HAP-1 (cell line): ENCODE measurements at regions of chr10 and their contacts with region 1.

Region 1: DNA sequence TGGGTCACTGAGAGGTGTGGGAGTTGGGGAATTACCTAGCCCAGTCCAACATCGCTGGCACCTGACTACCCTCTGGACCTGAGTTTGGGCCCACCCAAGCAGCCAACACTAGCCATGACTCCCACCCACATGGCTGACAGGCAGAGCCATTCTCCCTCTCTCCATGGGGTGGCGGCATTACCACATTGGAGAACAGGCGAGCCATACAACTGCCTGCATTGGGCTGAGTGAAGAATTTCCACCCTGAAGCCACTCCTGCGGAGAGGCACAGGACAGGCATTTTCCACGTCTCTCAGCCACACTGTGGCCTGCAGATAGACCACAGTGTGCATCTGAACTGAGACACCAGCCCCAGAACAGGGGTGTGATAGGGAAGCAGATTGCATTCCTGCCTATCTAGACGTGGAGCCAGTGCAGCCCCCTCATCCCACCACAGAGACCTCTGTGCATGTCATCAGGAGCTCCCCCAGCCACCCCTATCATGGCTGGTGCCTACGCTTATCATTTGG is 58.2 kb upstream of the ANTXRL start:
- DNase-seq: peak; percentile 69 to 84
- H3K4me3 ChIP-seq: no peak overlapping the region
- H3K4me1 ChIP-seq: no peaks in the 10 kb centered on the region
- H3K27me3 ChIP-seq: no peaks in the 10 kb centered on the region

Region 2: DNA sequence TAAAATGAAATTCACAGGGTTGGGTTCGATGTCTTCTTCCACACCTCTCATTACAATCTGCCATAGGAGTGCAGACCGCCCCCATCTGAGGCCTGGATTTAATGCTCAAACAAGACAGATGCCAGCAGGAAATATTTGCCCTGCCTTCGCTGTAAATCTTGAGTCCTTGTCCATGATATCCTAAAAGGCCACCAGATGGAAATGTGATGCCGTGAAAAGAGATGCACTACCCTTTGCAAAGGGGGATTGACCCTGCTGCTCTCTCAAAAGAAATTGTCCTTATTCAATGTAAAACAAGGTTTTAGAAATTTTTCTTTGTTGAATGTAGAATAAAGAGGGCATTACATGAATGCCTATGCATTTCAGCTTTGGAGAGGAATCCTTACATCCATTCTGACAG is 418.8 kb before region 1 on chr10:
- in situ Hi-C with region 1: loop called (anchors 25 kb)
- DNase-seq: peak; percentile 40 to 51
- H3K4me3 ChIP-seq: no peak overlapping the region
- H3K4me1 ChIP-seq: no peaks in the 10 kb centered on the region
- H3K27me3 ChIP-seq: no peaks in the 10 kb centered on the region